PC-3 (cell line): ENCODE measurements at regions of chr6 and their contacts with region 1.

Region 1: GRCh38 chr6:109165392-109165974 is 70.2 kb downstream of the CEP57L1 start:
- DNase-seq: peak; percentile 4
- ATAC-seq: no peak
- H3K4me3 ChIP-seq: no peak overlapping the region
- H3K27ac ChIP-seq: no peak overlapping the region
- H3K4me1 ChIP-seq: no peaks in the 10 kb centered on the region
- H3K27me3 ChIP-seq: no peaks in the 10 kb centered on the region
- CTCF ChIP-seq: no peak

Region 2: GRCh38 chr6:109482905-109483735 is 317.6 kb after region 1 on chr6 and contains the start of gene ZBTB24:
- CTCF ChIA-PET with region 1: no interaction called
- POLR2A ChIA-PET with region 1: interaction called, 16 read pairs
- intact Hi-C with region 1: no loop called
- DNase-seq: peak; percentile 84
- ATAC-seq: peak; percentile 71
- H3K4me3 ChIP-seq: peak within 1 kb of the TSS; percentile 90
- H3K27ac ChIP-seq: peak within 1 kb of the TSS; percentile 36
- H3K4me1 ChIP-seq: peaks cover 42% of the 10 kb centered on the region
- H3K27me3 ChIP-seq: no peaks in the 10 kb centered on the region
- CTCF ChIP-seq: no peak
- total RNA-seq, gene ZBTB24: 4.5 and 6.1 TPM in 2 replicates

Region 3: DNA sequence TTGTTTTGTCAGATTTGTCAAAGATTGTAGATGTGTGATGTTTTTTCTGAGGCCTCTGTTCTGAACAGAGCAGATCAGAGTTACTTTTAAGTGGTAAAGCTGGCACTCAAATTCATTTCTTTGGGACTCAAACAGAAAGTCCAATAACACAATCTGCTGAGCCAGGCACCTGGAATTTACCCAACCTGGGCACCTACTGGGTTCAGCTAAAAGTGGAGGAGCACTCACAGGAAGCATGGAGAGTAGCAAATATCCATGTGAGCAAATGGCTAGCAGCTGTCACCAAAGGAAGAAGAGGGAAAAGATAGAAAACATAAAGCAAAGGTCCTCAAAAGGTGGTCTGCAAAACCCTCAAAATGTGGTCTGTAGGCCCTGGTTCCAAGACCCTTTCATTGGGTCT is 642.4 kb after region 1 on chr6:
- CTCF ChIA-PET with region 1: no interaction called
- POLR2A ChIA-PET with region 1: no interaction called
- intact Hi-C with region 1: no loop called
- DNase-seq: no peak
- ATAC-seq: no peak
- H3K4me3 ChIP-seq: no peak overlapping the region
- H3K27ac ChIP-seq: no peak overlapping the region
- H3K4me1 ChIP-seq: peaks cover 5% of the 10 kb centered on the region; the same call in 1 of the 2 replicates
- H3K27me3 ChIP-seq: no peaks in the 10 kb centered on the region
- CTCF ChIP-seq: no peak